AG04449 (cell line): ENCODE measurements at regions of chr18 and their contacts with region 1.

Region 1: DNA sequence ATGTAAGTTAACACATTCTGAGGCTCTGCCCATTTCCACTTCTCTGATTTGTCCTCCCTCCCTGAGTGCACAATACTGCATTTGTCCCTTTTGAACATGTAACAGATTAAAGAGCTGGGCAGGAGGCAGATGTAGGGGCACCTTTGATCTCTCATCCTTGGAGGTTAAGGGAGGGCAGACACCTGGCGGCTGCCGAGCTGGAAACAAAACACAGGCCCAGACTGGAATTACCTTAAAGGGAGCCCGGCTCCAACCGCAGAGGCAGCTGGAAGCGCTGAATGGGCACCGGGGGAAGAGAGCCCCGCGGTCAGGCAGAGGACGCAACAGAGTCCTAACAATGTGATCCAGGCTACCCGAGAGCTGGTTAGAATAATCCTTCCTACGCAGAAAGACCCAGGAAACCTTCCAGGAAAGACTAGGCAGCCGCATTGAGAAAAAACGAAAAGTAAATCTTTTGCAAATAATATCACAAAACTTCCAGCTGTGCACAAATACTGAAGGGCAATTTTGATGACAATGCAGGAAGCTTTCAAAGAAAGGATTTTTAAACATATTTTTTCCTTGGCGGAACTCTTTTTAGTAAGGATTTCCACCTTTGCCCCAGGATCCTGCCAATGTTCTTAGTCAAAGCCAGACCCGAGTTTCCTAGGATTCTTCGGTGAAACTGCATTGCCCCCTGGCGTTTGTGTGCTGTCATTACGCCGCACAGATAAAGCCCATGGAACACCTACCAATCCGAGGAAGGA is 216.0 kb downstream of the TGIF1 start:
- DNase-seq: peak; percentile 45
- H3K4me3 ChIP-seq: peak overlapping the region; percentile 15; the same call in 1 of the 2 replicates
- CTCF ChIP-seq: peak; percentile 86

Region 2: DNA sequence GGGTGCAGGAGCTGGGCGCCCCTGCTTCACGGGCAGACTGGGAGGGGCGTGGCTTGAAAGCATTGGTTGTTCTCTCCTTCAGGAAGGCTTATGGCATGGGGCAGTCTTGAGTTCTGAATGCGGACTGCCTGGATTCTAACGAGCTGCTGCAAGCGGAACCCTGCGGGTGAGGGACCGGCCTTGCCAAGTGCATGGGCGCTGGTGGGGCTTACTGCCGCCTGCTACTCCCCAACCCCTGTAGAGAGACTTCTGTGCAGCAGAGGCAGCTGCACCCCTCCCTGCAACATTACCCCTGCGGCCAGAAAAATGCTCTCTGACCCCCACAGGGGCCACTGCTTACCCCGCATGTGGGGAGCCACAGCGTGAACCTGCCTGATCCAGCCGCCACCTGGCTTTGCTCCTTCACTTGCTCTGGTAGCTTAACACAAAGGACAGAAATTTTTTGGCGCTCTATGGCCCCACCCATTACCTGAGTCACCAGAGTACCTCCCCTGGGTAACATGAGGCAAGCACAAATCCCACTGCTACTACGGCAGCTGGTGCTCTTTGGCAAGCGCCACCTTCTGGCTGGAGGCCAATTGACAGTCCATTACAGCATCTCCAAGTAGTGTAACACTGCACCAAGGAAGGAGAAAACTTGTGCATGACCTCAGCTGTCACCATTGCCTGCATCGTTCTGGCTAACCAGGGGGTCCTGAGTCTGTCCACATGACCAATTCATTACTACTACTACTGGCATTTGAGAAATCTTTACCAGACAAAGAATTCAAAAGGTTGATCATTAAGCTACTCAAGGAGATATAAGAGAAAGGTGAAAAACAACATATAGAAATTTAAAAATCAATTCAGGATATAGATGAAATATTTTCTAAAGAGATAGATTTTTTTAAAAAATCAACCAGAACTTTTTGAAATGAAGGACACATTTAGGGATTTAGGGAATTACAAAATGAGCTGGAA is 368.6 kb before region 1 on chr18:
- CTCF ChIA-PET with region 1: interaction called, 12 read pairs
- POLR2A ChIA-PET with region 1: no interaction called
- DNase-seq: no peak
- H3K4me3 ChIP-seq: peak overlapping the region; percentile 61
- CTCF ChIP-seq: peak; percentile 52

Region 3: DNA sequence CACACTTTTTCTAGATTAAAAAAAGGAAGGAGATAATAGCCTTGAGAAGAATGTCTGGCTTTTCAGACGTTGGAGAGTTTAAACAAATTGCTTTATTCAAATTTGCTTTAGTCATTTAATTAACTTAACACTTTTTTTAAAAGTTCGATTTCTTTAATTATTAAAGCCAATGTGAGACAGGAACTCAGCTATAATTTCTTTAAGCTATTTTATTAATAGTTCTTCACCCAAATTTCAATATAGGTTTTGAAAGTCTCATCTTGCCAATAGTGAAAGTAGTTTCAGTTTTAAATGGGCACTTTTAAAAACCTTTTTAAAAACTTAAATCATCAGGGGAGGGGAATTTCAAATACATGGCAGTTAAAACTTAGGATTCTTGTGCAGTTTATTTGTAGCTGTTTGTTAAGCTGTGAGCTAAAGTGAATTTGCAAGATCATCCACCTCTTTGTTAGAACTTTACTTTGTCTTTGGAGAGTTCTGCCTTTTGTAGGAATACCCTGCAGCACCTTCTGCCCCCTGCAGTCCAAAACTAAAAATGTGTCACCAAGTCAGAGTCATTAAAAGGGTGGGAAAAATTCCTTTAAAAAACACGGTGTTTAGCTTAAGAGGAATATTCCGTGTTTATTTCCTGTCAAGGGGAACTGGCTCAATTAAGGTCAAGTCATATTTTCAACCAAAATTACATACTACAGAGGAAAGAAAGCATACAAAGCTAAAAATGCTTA is 211.4 kb before region 1 on chr18:
- CTCF ChIA-PET with region 1: interaction called, 82 read pairs
- POLR2A ChIA-PET with region 1: interaction called, 8 read pairs
- DNase-seq: no peak
- H3K4me3 ChIP-seq: peak overlapping the region; percentile 81
- CTCF ChIP-seq: peak; percentile 49

Region 4: DNA sequence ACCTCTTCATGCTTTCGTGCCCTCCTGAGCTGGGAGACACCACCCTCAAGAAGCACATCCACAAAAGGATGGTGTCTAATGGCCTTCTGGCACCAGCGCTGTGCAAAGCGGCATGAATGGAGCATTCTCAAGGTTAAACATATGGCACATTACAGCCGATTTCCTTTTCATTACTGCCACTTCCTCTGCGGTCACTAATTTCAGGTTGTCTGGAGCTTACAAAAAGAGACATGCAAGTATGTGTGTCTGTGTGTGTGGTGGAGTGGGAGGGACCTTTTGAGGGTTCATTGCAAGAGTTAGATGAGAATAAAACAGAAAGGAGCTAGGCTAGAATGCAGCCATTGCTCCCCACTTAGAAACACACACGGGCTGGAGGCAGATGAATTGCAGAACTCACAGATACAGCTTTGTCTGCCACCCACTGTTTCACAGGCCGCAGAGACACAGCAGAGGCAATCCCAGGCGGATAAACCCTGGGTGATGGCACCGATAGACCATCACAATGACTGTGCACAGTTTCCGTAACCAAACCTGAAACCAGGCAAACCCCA is 140.0 kb before region 1 on chr18:
- CTCF ChIA-PET with region 1: no interaction called
- POLR2A ChIA-PET with region 1: no interaction called
- DNase-seq: no peak
- H3K4me3 ChIP-seq: no peak overlapping the region
- CTCF ChIP-seq: no peak

Region 5: DNA sequence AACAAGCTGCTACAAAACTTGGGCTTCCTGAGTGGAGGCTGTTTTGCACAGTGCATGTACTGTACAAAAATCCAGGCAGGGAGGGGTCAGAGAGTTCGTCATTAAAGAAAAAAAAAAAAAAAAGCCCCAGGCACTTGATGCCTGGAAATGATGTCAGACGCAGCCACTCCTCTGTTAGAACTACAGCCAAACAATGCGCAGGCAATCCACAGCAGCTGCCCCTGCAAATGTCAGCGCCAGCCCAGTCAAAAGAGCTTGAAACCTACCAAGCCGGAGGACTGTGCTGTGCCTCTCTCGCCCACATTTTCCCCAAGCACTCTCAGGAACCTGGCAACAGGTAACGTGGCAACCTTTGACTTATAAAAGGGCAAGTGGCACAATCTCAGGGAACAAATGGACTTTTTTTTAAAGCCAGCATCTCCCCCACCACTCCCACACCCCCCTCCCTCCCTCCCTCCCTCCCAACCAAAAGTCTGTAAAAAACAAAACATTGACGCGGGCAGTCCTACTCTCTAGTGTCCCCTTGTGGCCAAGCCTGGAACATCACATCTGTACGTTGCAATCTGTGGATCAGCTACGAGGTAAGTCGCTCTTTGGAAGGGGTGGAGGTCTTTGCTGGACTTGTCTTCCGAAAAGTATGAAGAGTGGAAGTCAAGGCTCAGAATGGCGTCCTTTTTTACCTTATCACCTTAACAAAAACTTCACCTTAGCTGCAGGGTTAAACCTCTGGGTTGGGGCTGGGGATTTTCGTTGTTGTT is 71.9 kb before region 1 on chr18:
- CTCF ChIA-PET with region 1: interaction called, 102 read pairs
- POLR2A ChIA-PET with region 1: interaction called, 12 read pairs
- DNase-seq: peak; percentile 91
- H3K4me3 ChIP-seq: peak overlapping the region; percentile 64
- CTCF ChIP-seq: peak; percentile 89

Region 6: DNA sequence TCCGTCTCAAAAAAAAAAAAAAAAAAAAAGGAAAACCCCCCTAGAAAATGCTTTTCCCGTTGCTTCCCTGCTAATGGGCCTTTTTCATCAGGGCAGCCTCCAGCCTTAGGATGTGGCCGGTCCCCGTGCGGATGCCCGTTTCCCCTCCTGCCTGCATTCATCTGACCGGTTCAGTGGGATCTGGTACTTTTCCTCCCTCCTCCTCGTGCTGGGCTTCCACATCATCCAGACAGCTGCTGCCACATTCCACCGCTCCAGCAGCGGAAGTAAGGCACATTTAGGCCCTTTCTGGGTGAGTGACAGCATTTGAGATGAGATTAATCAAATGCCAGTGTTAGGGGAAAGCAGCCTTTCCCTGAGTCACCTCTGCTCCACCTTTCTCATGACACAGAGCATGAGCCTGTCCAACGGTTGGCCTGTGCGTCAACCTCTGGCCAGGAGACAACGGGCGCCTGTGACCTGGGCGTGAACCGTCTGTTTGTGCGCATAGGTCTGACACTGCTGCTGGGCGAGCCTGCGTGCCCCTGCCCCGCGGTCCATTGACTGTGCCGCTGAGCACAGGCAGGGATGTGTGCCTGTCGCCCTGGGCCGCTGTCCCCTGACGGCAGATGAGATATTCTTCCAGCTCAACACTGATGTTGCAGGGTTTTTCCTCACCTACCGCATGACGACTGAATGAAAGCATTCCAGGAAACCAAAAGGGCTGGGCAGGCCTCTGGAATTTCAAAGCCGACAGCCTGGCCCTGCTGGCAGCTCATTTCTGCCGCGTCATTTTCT is 42.0 kb before region 1 on chr18:
- CTCF ChIA-PET with region 1: interaction called, 17 read pairs
- POLR2A ChIA-PET with region 1: interaction called, 3 read pairs
- DNase-seq: peak; percentile 95
- H3K4me3 ChIP-seq: peak overlapping the region; percentile 51
- CTCF ChIP-seq: no peak

Region 7: GRCh38 chr18:3692113-3692621 is 26.2 kb after region 1 on chr18:
- CTCF ChIA-PET with region 1: interaction called, 10 read pairs
- POLR2A ChIA-PET with region 1: no interaction called
- DNase-seq: no peak
- H3K4me3 ChIP-seq: no peak overlapping the region
- CTCF ChIP-seq: no peak

Region 8: DNA sequence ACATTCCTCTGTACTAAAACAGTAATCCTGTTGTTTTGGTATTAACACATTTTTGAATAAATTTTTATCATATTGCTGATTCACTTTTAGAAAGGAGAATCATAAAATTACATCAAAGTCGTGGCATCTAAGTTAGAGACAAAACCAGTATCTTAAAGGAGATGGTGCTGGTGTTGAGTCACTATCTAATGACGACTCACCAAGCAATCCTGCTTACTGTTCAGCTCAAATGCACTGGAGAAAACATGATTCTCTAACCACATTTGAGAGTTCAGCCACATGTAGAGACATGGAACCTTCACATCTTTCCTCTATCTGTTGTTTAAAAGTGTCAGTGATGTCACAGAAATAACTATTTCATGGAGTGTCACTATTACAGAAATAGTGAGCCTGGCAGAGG is 257.8 kb after region 1 on chr18:
- CTCF ChIA-PET with region 1: no interaction called
- POLR2A ChIA-PET with region 1: no interaction called
- DNase-seq: peak; percentile 75
- H3K4me3 ChIP-seq: no peak overlapping the region
- CTCF ChIP-seq: no peak